Mammary epithelial cell (primary cell): ENCODE measurements at regions of chr9 and their contacts with region 1.

Region 1: GRCh38 chr9:21381448-21382339 is 3.5 kb downstream of the IFNA2 start:
- DNase-seq: no peak
- H3K4me3 ChIP-seq: no peak overlapping the region
- H3K27ac ChIP-seq: no peak overlapping the region
- H3K4me1 ChIP-seq: no peaks in the 10 kb centered on the region
- H3K27me3 ChIP-seq: peaks cover 19% of the 10 kb centered on the region
- CTCF ChIP-seq: no peak

Region 2: GRCh38 chr9:21244836-21245235 is 136.9 kb before region 1 on chr9:
- CTCF ChIA-PET with region 1: no interaction called
- dilution Hi-C with region 1: no loop called
- in situ Hi-C with region 1: no loop called
- intact Hi-C with region 1: no loop called
- DNase-seq: no peak
- H3K4me3 ChIP-seq: no peak overlapping the region
- H3K27ac ChIP-seq: no peak overlapping the region
- H3K4me1 ChIP-seq: no peaks in the 10 kb centered on the region
- H3K27me3 ChIP-seq: peaks cover 10% of the 10 kb centered on the region
- CTCF ChIP-seq: no peak

Region 3: GRCh38 chr9:21465859-21466518 is 84.3 kb after region 1 on chr9:
- CTCF ChIA-PET with region 1: no interaction called
- dilution Hi-C with region 1: loop called (anchors 5 kb)
- in situ Hi-C with region 1: no loop called
- intact Hi-C with region 1: no loop called
- DNase-seq: peak; percentile 36
- H3K4me3 ChIP-seq: no peak overlapping the region
- H3K27ac ChIP-seq: no peak overlapping the region
- H3K4me1 ChIP-seq: no peaks in the 10 kb centered on the region
- H3K27me3 ChIP-seq: no peaks in the 10 kb centered on the region
- CTCF ChIP-seq: peak; percentile 62 to 69